Sigmoid colon (tissue), 7 donors: ENCODE measurements at regions of chr2 and their contacts with region 1.

Region 1: GRCh38 chr2:175690113-175690837 is 311.8 kb downstream of the LNPK start:
- DNase-seq: no peak
- H3K4me3 ChIP-seq: no peak overlapping the region
- H3K27ac ChIP-seq: peak overlapping the region in 2 of 4 donors; percentile 8 to 12
- H3K4me1 ChIP-seq: peaks cover 0 to 4% (median 2%) of the 10 kb centered on the region in 4 donors
- H3K27me3 ChIP-seq: no peaks in the 10 kb centered on the region
- CTCF ChIP-seq: peak; percentile 46 to 76 (median 74)
- EP300 ChIP-seq: no peak
- POLR2A ChIP-seq: no peak

Region 2: GRCh38 chr2:176001916-176002687 is 311.8 kb after region 1 on chr2 and contains the start of gene LNPK:
- intact Hi-C with region 1: loop called (anchors 2 kb)
- DNase-seq: peak; percentile 96
- H3K4me3 ChIP-seq: peak within 1 kb of the TSS; percentile 72 to 88 (median 77)
- H3K27ac ChIP-seq: peak within 1 kb of the TSS; percentile 84 to 91 (median 87)
- H3K4me1 ChIP-seq: peaks cover 0 to 40% (median 17%) of the 10 kb centered on the region in 4 donors
- H3K27me3 ChIP-seq: no peaks in the 10 kb centered on the region
- CTCF ChIP-seq: no peak
- EP300 ChIP-seq: peak in 1 of 4 donors; percentile 53
- POLR2A ChIP-seq: peak; percentile 84 to 93
- total RNA-seq, gene LNPK: 15.9 to 48.2 (median 37.1) TPM